Right ventricle myocardium inferior (tissue), 1 donor: ENCODE measurements at regions of chr2 and their contacts with region 1.

Region 1: GRCh38 chr2:156341452-156342253 is 9.1 kb upstream of the NR4A2 start:
- DNase-seq: peak; percentile 94
- ATAC-seq: peak; percentile 89

Region 2: DNA sequence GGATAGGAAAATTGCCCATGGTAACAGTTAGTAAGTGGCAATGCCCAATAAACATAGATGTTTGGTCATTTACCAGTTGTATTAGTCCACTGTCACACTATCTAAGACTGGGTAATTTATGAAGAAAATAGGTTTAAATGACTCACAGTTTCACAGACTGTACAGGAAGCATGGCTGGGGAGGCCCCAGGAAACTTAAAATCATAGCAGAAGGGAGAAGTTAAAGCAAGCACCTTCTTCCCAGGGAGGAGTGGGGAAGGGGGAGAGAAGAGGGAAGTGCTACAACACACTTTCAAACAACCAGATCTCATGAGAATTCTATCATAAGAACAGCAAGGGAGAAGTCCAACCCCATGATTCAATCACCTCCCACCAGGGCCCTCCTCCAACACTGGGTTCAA is 32.5 kb before region 1 on chr2:
- intact Hi-C with region 1: no loop called
- DNase-seq: no peak
- ATAC-seq: no peak

Region 3: GRCh38 chr2:156400706-156401678 is 59.3 kb after region 1 on chr2:
- intact Hi-C with region 1: loop called (anchors 1 kb)
- DNase-seq: peak; percentile 72
- ATAC-seq: peak; percentile 92